ENCODE measurements at regions of chr6 and their contacts with region 1.

Region 1: DNA sequence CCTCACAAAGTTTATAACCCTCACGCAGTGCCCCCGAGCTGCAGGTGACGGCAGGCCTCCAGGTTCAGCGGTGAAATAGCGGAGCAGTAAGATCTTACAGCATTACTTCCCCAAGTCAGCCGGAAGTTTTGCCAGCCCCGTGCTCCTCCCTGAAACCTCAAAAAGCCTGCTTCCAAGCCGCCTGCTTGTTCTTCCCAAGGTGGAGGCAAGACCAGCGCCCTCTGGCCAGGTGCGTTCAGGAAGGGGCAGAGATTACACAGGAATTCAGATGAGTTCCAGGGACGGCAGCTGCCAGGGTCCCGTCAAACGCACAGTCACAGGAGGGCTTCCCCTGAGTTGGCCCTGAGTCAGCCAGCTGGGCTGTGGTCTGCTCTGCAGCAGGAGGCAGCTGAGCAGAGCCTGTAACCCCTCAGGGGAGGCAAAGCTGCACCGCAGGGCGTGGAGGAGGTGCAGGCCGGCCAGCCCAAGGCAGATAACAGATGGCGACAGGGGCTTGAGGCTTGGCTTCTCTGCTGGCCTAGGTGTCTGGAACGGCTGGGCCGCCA is 124.1 kb upstream of the RPS6KA2 start:
- DNase-seq: no peak
- H3K4me3 ChIP-seq: no peak overlapping the region
- H3K27ac ChIP-seq: no peak overlapping the region
- H3K27me3 ChIP-seq: peaks cover 0 to 8% (median 0%) of the 10 kb centered on the region in 45 donors
- CTCF ChIP-seq: no peak

Region 2: DNA sequence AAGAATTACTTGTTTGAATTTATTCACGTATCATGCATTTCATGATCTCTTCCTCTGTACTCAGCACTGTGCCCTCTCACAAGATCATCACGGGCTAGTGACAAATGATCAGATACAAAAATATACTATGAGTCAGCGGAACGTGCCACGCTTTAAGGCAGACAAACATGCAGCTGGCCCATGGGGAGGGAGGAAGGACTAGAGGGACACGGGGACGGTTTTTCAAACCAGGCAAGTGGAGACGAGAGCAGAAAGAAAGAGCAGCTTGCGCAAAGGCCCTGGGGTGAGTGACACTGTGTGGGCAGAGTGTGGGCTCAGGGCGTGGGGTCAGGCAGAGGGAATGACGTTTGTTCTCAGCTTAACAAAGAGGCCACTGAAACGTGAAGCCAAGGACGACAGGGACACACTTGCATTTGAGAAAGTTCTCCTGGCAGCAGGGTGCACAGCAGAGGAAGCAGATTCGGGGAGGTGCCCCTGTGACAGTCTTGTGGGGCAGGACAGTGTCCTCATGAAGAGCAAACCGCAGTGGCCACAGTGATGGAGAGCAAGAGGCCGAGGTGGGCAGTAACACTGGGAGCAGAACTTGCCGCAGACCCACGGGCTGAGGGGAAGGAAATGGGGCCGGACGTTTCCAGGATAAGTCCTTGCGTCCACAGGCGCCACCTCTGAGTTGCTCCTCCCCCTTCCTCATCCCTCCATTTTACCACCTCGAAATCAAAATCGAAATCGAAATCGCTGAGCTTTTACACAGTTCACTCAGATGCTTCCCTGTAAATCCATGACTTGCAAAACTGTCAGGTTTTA is 117.2 kb before region 1 on chr6:
- intact Hi-C with region 1: loop called in 1 of 2 experiments (anchors 10 kb)
- DNase-seq: no peak
- H3K4me3 ChIP-seq: no peak overlapping the region
- H3K27ac ChIP-seq: no peak overlapping the region
- H3K27me3 ChIP-seq: no peaks in the 10 kb centered on the region
- CTCF ChIP-seq: no peak

Measured in dorsolateral prefrontal cortex (tissue), 120 donors.